HCT116 (cell line): ENCODE measurements at regions of chr17 and their contacts with region 1.

Region 1: GRCh38 chr17:75012346-75013091 is at the start of gene MRPL58:
- DNase-seq: peak; percentile 84
- ATAC-seq: peak; percentile 93
- H3K4me3 ChIP-seq: peak within 1 kb of the TSS; percentile 83 to 95
- H3K27ac ChIP-seq: peak within 1 kb of the TSS; percentile 76
- H3K4me1 ChIP-seq: peaks cover 11 to 19% of the 10 kb centered on the region in 2 experiments
- H3K27me3 ChIP-seq: no peaks in the 10 kb centered on the region
- CTCF ChIP-seq: peak in 2 of 3 experiments; percentile 39 to 65; a peak in 4 of 6 replicates
- POLR2A ChIP-seq: peak; percentile 90
- RAD21 ChIP-seq: peak; percentile 46
- total RNA-seq, gene MRPL58: 80.5 TPM

Region 2: GRCh38 chr17:74981979-74982662 is 30.4 kb before region 1 on chr17:
- CTCF ChIA-PET with region 1: interaction called, 12 read pairs
- POLR2A ChIA-PET with region 1: interaction called, 10 read pairs
- RAD21 ChIA-PET with region 1: interaction called in 1 of 2 experiments, 3 read pairs
- intact Hi-C with region 1: no loop called
- DNase-seq: peak; percentile 57
- ATAC-seq: peak; percentile 96
- H3K4me3 ChIP-seq: peak overlapping the region; percentile 57 to 78
- H3K27ac ChIP-seq: peak overlapping the region; percentile 76
- H3K4me1 ChIP-seq: peaks cover 13 to 28% of the 10 kb centered on the region in 2 experiments
- H3K27me3 ChIP-seq: no peaks in the 10 kb centered on the region
- CTCF ChIP-seq: 0 out of 6 replicates have a peak, but pooled peaks of 1 of the 3 experiments have one; percentile 15
- POLR2A ChIP-seq: peak; percentile 96
- RAD21 ChIP-seq: no peak

Region 3: GRCh38 chr17:74987418-74987908 is 25.1 kb before region 1 on chr17 and contains the start of gene CDR2L:
- CTCF ChIA-PET with region 1: interaction called, 12 read pairs
- POLR2A ChIA-PET with region 1: interaction called, 10 read pairs
- RAD21 ChIA-PET with region 1: interaction called in 1 of 2 experiments, 3 read pairs
- intact Hi-C with region 1: no loop called
- DNase-seq: peak; percentile 83
- ATAC-seq: peak; percentile 88
- H3K4me3 ChIP-seq: peak within 1 kb of the TSS; percentile 71 to 75
- H3K27ac ChIP-seq: peak within 1 kb of the TSS; percentile 91
- H3K4me1 ChIP-seq: peaks cover 48 to 58% of the 10 kb centered on the region in 2 experiments
- H3K27me3 ChIP-seq: no peaks in the 10 kb centered on the region
- CTCF ChIP-seq: no peak
- POLR2A ChIP-seq: peak; percentile 90
- RAD21 ChIP-seq: no peak
- total RNA-seq, gene CDR2L: 26.5 TPM

Region 4: DNA sequence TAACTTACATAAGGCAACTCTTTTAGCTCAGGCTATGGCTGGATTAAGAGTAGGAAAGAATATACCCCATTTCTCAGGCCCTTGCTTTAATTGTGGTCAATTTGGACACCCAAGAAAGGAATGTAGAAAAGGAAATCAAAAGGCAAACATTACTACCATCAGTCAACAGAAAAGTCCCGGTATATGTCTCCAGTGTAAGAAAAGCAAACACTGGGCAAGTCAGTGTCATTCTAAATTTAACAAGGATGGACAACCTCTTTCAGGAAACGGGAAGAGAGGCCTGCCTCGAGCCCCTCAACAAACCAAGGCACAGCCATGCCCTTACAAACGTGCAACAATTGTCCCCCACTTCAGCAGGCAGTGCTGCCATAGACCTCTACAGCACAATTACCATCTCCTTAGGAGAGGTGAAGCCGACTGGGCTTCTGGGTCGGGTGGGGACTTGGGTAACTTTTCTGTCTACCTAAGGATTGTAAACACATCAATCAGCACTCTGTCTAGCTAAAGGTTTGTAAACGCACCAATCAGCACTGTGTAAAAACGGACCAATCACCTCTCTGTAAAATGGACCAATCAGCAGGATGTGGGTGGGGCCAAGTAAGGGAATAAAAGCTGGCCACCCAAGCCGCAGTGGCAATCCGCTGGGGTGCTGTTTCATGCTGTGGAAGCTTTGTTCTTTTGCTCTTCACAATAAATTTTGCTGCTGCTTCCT is 12.3 kb after region 1 on chr17:
- CTCF ChIA-PET with region 1: interaction called, 9 read pairs
- POLR2A ChIA-PET with region 1: interaction called, 15 read pairs
- RAD21 ChIA-PET with region 1: no interaction called
- intact Hi-C with region 1: no loop called
- DNase-seq: no peak
- ATAC-seq: no peak
- H3K4me3 ChIP-seq: no peak overlapping the region
- H3K27ac ChIP-seq: no peak overlapping the region
- H3K4me1 ChIP-seq: no peaks in the 10 kb centered on the region
- H3K27me3 ChIP-seq: no peaks in the 10 kb centered on the region
- CTCF ChIP-seq: no peak
- POLR2A ChIP-seq: no peak
- RAD21 ChIP-seq: no peak

Region 5: DNA sequence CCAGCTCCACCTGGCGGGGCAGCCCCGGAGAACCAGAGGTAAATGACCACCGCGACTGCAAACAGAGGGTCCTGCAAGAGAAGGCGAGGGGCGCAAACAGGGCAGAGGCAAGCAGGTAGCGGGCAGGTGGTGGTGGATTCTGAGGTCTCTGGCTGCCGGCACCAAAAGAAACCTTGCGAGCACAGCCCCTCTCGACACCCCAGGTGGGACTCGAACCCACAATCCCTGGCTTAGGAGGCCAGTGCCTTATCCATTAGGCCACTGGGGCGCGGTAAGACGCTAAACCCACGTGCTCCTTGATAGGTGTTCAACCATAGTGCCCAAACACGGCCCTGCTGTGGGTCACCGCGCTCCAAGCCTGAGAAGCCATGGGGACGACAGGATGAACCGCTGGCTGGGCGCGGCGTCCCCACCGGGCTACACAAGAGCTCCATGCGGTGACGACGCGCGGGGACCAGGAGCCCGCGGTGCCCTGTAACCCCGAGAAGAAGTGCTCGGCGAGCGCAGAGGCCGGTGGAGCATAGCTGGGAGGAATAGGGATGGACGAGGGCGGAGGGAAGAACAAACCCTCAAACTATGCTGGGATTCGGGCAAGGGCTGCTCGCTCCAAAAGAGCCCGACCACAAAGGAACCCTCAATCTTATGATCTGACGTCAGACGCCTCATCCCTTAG is 21.9 kb after region 1 on chr17:
- CTCF ChIA-PET with region 1: interaction called, 4 read pairs
- POLR2A ChIA-PET with region 1: interaction called, 13 read pairs
- RAD21 ChIA-PET with region 1: no interaction called
- intact Hi-C with region 1: no loop called
- DNase-seq: peak; percentile 93
- ATAC-seq: peak; percentile 62
- H3K4me3 ChIP-seq: peak overlapping the region; percentile 46 to 57
- H3K27ac ChIP-seq: peak overlapping the region; percentile 87
- H3K4me1 ChIP-seq: peaks cover 45 to 58% of the 10 kb centered on the region in 2 experiments
- H3K27me3 ChIP-seq: no peaks in the 10 kb centered on the region
- CTCF ChIP-seq: peak in 2 of 3 experiments; percentile 7 to 37; a peak in 1 of 6 replicates
- POLR2A ChIP-seq: no peak
- RAD21 ChIP-seq: no peak